Esophagus muscularis mucosa (tissue), 4 donors: ENCODE measurements at regions of chr9 and their contacts with region 1.

Region 1: DNA sequence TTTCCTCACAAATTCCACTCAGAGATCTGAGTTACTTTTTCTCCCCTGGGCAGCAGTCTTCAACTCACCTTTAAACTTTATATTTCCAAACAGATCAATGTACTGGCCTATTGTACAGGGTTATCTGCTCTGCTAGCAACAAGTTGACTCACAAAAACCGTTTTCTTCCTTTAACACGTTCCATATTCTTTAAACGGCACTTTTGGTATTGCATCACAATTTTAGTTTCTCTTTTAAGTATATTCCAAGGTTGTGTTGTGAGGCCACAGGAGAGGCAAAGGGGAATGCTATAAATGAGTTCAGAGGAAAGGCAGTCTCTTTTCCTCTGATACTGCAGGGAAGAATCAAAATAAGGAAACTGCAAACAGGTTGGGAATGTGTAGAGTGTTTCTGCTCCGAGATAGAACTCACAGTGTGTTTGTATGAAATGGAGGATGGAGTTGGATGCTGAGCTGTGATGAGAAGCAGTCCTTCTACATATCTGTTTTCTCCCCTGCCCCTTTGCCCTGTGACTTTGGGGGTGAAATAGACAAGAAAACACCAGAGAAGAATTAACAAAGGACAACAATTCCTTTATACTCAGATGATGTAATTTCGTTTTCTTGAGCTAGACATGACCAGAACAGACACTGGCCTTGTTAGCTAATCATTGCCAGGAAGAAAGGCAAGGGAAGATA is 9.9 kb upstream of the ALDOB start:
- DNase-seq: no peak
- H3K4me3 ChIP-seq: no peak overlapping the region
- H3K27ac ChIP-seq: no peak overlapping the region
- H3K4me1 ChIP-seq: peaks cover 0 to 14% (median 9%) of the 10 kb centered on the region in 4 donors
- H3K27me3 ChIP-seq: peaks cover 0 to 14% (median 0%) of the 10 kb centered on the region in 4 donors
- CTCF ChIP-seq: no peak
- EP300 ChIP-seq: no peak
- POLR2A ChIP-seq: no peak

Region 2: DNA sequence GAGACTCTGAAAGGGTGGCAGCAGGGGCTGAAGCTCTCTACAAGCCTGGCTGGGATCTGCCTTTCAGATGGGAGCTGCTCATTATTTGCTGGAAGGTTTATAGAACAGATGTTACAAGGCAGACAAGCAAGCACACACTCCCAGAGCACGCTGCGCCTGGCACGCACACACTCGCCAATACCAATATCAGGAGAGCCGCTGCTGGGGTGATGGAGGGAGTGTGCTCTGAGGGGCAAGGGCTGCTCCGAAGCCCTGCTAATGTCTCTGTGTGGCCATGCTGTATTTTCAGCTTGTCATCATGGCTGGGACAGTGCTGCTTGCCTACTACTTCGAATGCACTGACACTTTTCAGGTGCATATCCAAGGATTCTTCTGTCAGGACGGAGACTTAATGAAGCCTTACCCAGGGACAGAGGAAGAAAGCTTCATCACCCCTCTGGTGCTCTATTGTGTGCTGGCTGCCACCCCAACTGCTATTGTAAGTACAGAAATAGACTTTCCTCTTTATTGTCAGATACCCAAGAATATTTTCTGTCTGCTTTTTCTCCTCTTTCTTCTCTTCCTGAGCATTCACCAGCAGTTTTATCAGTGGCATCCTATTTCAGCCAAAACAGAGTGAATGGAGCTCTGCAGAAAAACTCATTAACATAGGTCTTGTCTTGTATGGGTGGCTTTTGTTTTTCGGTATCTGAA is 175.8 kb before region 1 on chr9:
- intact Hi-C with region 1: no loop called
- DNase-seq: no peak
- H3K4me3 ChIP-seq: no peak overlapping the region
- H3K27ac ChIP-seq: no peak overlapping the region
- H3K4me1 ChIP-seq: no peaks in the 10 kb centered on the region
- H3K27me3 ChIP-seq: peaks cover 0 to 4% (median 0%) of the 10 kb centered on the region in 4 donors
- CTCF ChIP-seq: no peak
- EP300 ChIP-seq: no peak
- POLR2A ChIP-seq: no peak

Region 3: GRCh38 chr9:101354143-101354764 is 91.2 kb before region 1 on chr9:
- intact Hi-C with region 1: no loop called
- DNase-seq: no peak
- H3K4me3 ChIP-seq: no peak overlapping the region
- H3K27ac ChIP-seq: no peak overlapping the region
- H3K4me1 ChIP-seq: no peaks in the 10 kb centered on the region
- H3K27me3 ChIP-seq: no peaks in the 10 kb centered on the region
- CTCF ChIP-seq: no peak
- EP300 ChIP-seq: no peak
- POLR2A ChIP-seq: no peak

Region 4: DNA sequence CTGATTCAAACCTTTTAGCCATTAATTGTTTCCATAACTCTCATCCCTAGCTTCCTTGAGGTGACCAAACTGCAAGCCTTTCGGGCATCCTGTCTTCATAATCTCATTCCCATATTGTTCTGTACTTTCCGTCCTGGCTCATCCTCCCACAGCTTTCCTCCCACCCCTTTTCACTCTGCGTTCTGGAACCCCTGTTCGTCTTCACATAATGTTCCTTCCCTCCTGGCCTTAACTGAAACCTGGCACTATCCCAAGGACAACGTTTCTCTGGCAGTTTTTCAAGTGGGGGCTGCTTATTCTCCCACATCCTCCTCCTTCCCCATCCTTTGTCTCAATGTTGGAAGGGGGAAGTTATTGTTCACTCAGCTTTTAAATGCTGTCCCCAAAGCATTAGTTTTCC is 45.4 kb before region 1 on chr9:
- intact Hi-C with region 1: loop called (anchors 2 kb)
- DNase-seq: no peak
- H3K4me3 ChIP-seq: peak overlapping the region; percentile 65 to 85 (median 68)
- H3K27ac ChIP-seq: peak overlapping the region in 1 of 4 donors; percentile 84
- H3K4me1 ChIP-seq: peaks cover 34 to 53% (median 47%) of the 10 kb centered on the region in 4 donors
- H3K27me3 ChIP-seq: no peaks in the 10 kb centered on the region
- CTCF ChIP-seq: no peak
- EP300 ChIP-seq: no peak
- POLR2A ChIP-seq: no peak